Naive thymus-derived CD4-positive, alpha-beta T cell (primary cell): ENCODE measurements at regions of chr16 and their contacts with region 1.

Region 1: DNA sequence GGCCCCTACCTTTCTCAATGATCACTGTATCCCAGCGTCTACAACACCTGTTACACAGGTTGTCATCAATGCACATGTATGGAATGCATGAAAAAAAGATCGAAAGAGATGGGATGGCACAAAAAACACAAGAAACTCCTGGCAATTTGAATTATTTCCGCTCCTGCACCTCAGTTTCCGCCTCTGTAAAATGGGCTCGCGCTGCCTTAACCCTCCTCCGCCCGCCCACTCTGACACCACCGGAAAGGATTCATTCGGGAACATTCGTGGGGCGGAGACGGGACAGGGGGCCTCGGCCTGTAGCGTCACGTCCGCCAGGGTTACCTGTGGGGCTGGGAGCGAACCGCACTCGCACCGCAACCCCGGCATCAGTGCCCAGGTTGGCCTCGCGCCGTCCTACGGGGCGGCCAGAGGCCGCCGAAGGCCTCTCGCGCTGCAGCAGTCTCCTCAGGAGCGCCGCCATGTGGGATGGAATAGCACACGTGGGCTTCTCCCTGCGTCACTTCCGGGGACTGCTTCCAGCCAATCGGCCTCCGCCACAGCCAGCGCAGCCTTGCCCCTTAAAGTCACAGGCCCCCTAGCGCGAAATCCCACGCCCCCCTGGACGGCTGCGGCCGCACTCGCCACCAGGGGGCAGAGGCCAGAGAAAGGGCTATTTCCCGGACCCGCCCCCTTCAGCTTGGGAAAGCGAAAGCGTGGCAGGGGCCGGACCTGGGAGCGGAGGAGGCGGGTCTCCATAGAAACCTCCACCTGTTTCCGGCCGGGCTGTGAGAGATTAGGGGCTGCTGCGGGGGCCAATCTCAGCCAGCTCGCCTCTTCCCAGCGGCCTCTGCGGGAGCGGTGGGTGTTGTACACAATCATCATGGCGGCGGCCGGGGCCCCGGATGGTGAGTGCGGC is at the starts of genes EARS2 and UBFD1:
- DNase-seq: peak; percentile 91 to 99 (median 95)
- ATAC-seq: peak; percentile 92
- H3K4me3 ChIP-seq: peak within 1 kb of the TSS; percentile 98
- H3K4me3 Mint-ChIP-seq: peak within 1 kb of the TSS; percentile 92 to 97 (median 93)
- H3K27ac ChIP-seq: peak within 1 kb of the TSS; percentile 85
- H3K27ac Mint-ChIP-seq: peak within 1 kb of the TSS; percentile 85 to 96 (median 94)
- H3K4me1 ChIP-seq: peaks cover 15 to 17% of the 10 kb centered on the region in 2 donors
- H3K4me1 Mint-ChIP-seq: peaks cover 14 to 45% (median 36%) of the 10 kb centered on the region in 7 donors
- H3K27me3 ChIP-seq: no peaks in the 10 kb centered on the region
- H3K27me3 Mint-ChIP-seq: no peaks in the 10 kb centered on the region
- total RNA-seq, gene EARS2: 10.6 to 19.2 (median 15.1) TPM
- total RNA-seq, gene UBFD1: 43.4 to 54.4 (median 51.0) TPM

Region 2: GRCh38 chr16:23452572-23453337 is 104.4 kb before region 1 on chr16 and contains the start of gene COG7:
- CTCF ChIA-PET with region 1: no interaction called
- POLR2A ChIA-PET with region 1: no interaction called
- intact Hi-C with region 1: loop called (anchors 1 kb)
- DNase-seq: peak; percentile 71 to 88 (median 85)
- ATAC-seq: peak; percentile 94
- H3K4me3 ChIP-seq: peak within 1 kb of the TSS; percentile 92
- H3K4me3 Mint-ChIP-seq: peak within 1 kb of the TSS; percentile 88 to 99 (median 93)
- H3K27ac ChIP-seq: peak within 1 kb of the TSS; percentile 78
- H3K27ac Mint-ChIP-seq: peak within 1 kb of the TSS; percentile 87 to 96 (median 91)
- H3K4me1 ChIP-seq: peaks cover 9 to 10% of the 10 kb centered on the region in 2 donors
- H3K4me1 Mint-ChIP-seq: peaks cover 27 to 44% (median 39%) of the 10 kb centered on the region in 7 donors
- H3K27me3 ChIP-seq: no peaks in the 10 kb centered on the region
- H3K27me3 Mint-ChIP-seq: no peaks in the 10 kb centered on the region
- total RNA-seq, gene COG7: 16.1 to 28.4 (median 22.6) TPM

Region 3: GRCh38 chr16:23510164-23510914 is 46.8 kb before region 1 on chr16 and contains the start of gene GGA2:
- CTCF ChIA-PET with region 1: no interaction called
- POLR2A ChIA-PET with region 1: interaction called, 5 read pairs
- intact Hi-C with region 1: loop called (anchors 1 kb)
- DNase-seq: peak; percentile 61 to 84 (median 74)
- ATAC-seq: peak; percentile 96
- H3K4me3 ChIP-seq: peak within 1 kb of the TSS; percentile 73
- H3K4me3 Mint-ChIP-seq: peak within 1 kb of the TSS; percentile 86 to 99 (median 92)
- H3K27ac ChIP-seq: peak within 1 kb of the TSS; percentile 74
- H3K27ac Mint-ChIP-seq: peak within 1 kb of the TSS; percentile 78 to 94 (median 83)
- H3K4me1 ChIP-seq: peaks cover 36 to 50% of the 10 kb centered on the region in 2 donors
- H3K4me1 Mint-ChIP-seq: peaks cover 43 to 65% (median 56%) of the 10 kb centered on the region in 7 donors
- H3K27me3 ChIP-seq: no peaks in the 10 kb centered on the region
- H3K27me3 Mint-ChIP-seq: no peaks in the 10 kb centered on the region
- total RNA-seq, gene GGA2: 99.3 to 138 (median 104) TPM

Region 4: GRCh38 chr16:23595951-23596720 is 39.0 kb after region 1 on chr16 and contains the start of gene NDUFAB1:
- CTCF ChIA-PET with region 1: no interaction called
- POLR2A ChIA-PET with region 1: interaction called, 3 read pairs
- intact Hi-C with region 1: loop called (anchors 1 kb)
- DNase-seq: peak; percentile 82 to 97 (median 89)
- ATAC-seq: peak; percentile 100
- H3K4me3 ChIP-seq: peak within 1 kb of the TSS; percentile 82
- H3K4me3 Mint-ChIP-seq: peak within 1 kb of the TSS; percentile 74 to 89 (median 84)
- H3K27ac ChIP-seq: peak within 1 kb of the TSS; percentile 94
- H3K27ac Mint-ChIP-seq: peak within 1 kb of the TSS; percentile 65 to 89 (median 83)
- H3K4me1 ChIP-seq: peaks cover 5 to 13% of the 10 kb centered on the region in 2 donors
- H3K4me1 Mint-ChIP-seq: peaks cover 17 to 48% (median 29%) of the 10 kb centered on the region in 7 donors
- H3K27me3 ChIP-seq: no peaks in the 10 kb centered on the region
- H3K27me3 Mint-ChIP-seq: no peaks in the 10 kb centered on the region
- total RNA-seq, gene NDUFAB1: 24.2 to 85.3 (median 38.2) TPM

Region 5: DNA sequence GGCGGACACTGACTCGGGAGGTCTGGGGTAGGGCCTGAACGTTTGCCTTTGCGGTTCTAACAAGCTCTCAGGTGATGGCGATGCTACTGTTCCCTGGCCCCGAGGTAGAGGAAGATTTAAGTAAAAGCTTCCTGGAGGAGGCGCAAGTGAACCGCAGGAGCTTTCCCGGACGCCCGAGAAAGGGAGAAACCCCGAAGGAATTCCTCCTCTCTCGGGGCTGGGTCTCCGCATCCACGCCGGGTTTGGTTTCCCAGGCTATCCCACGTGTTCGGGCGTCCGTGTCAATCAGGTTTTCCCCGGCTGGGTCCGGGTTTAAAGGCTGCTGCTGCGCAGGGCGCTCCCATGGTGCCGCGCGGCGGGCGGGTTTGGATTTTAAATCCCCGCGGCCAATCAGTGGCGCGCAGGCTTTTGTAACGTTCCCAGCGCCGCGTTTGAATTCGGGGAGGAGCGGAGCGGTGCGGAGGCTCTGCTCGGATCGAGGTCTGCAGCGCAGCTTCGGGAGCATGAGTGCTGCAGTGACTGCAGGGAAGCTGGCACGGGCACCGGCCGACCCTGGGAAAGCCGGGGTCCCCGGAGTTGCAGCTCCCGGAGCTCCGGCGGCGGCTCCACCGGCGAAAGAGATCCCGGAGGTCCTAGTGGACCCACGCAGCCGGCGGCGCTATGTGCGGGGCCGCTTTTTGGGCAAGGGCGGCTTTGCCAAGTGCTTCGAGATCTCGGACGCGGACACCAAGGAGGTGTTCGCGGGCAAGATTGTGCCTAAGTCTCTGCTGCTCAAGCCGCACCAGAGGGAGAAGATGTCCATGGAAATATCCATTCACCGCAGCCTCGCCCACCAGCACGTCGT is 121.5 kb after region 1 on chr16 and contains the start of gene PLK1:
- CTCF ChIA-PET with region 1: no interaction called
- POLR2A ChIA-PET with region 1: no interaction called
- intact Hi-C with region 1: loop called in 1 of 2 experiments (anchors 1 kb)
- DNase-seq: peak; percentile 44 to 85 (median 65)
- ATAC-seq: peak; percentile 96
- H3K4me3 ChIP-seq: peak within 1 kb of the TSS; percentile 80
- H3K4me3 Mint-ChIP-seq: peak within 1 kb of the TSS; percentile 61 to 96 (median 84)
- H3K27ac ChIP-seq: peak within 1 kb of the TSS; percentile 39
- H3K27ac Mint-ChIP-seq: peak within 1 kb of the TSS in 4 of 9 donors; percentile 50 to 73 (median 60)
- H3K4me1 ChIP-seq: peaks cover 9 to 10% of the 10 kb centered on the region in 2 donors
- H3K4me1 Mint-ChIP-seq: peaks cover 10 to 44% (median 23%) of the 10 kb centered on the region in 7 donors
- H3K27me3 ChIP-seq: no peaks in the 10 kb centered on the region
- H3K27me3 Mint-ChIP-seq: peaks cover 0 to 9% (median 0%) of the 10 kb centered on the region in 5 donors
- total RNA-seq, gene PLK1: 0.45 to 65.0 (median 3.2) TPM

Region 6: DNA sequence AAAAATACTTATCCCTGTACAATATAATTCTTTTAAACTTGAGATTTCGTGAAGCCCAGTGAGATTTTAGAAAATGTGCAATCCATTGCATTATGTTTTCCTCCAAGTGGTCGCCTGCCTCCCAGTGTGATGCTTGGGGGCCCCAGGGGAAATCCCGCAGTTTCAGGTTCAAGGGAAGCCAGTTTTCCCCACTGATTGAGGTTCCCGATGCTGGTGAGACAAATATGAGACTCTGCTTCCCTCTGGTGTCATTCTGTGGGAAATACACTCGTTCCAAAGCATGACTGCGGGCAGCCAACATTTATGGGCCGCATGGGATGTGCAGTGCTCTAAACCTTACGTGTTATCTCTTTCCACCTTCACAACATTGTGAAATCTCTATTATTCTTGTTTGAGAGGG is 479.5 kb after region 1 on chr16:
- CTCF ChIA-PET with region 1: no interaction called
- POLR2A ChIA-PET with region 1: no interaction called
- intact Hi-C with region 1: loop called in 1 of 2 experiments (anchors 1 kb)
- DNase-seq: peak in 8 of 9 donors; percentile 11 to 62 (median 30)
- ATAC-seq: peak; percentile 55
- H3K4me3 ChIP-seq: no peak overlapping the region
- H3K4me3 Mint-ChIP-seq: peak overlapping the region in 4 of 10 donors; percentile 18 to 92 (median 49)
- H3K27ac ChIP-seq: no peak overlapping the region
- H3K27ac Mint-ChIP-seq: peak overlapping the region in 4 of 9 donors; percentile 19 to 92 (median 54)
- H3K4me1 ChIP-seq: peaks cover 14 to 38% of the 10 kb centered on the region in 2 donors
- H3K4me1 Mint-ChIP-seq: peaks cover 27 to 51% (median 45%) of the 10 kb centered on the region in 7 donors
- H3K27me3 ChIP-seq: no peaks in the 10 kb centered on the region
- H3K27me3 Mint-ChIP-seq: no peaks in the 10 kb centered on the region